ENCODE measurements at regions of chr2 and their contacts with region 1.

Region 1: DNA sequence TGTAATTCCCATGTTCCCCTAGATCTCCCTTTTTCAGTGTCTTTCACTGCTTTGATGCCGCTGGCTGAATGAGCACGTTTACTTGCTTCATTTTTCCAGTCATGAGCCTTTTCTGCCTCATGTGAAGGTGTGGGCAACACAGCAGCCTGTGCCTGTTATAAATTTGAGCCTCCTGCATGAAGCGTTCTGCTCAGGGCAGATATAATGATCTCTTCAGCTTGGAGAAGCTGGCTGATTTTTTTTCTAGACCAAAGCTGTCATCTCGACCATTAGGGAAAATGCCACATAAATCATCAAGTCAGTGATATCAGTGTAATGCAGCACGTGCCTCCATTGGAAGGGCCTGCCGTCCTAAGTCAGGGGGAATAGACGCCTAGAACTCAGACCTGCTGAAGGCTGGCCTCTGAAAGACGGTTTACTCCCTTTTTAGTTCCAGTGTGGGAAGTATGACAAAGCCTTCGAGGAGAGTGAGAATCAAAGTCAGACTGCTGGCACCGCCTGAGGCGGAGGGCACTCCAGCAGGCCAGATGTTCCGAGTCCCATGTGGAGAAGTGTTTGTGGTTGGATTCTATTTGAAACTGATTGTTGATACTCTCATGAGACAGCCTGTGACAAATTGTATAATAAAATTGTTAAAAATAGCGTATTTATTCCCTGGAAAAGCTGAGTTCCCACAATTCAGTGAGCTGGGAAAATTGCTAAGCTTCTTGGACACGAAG is 196.5 kb downstream of the MYO1B start:
- DNase-seq: peak; percentile 27
- ATAC-seq: no peak
- H3K4me3 ChIP-seq: no peak overlapping the region
- H3K27ac ChIP-seq: no peak overlapping the region
- H3K4me1 ChIP-seq: 0 out of 2 replicates have a peak, but pooled peaks cover 2% of the 10 kb centered on the region
- H3K27me3 ChIP-seq: no peaks in the 10 kb centered on the region; the same call in 1 of the 2 replicates
- CTCF ChIP-seq: no peak
- POLR2A ChIP-seq: no peak
- RAD21 ChIP-seq: no peak

Region 2: DNA sequence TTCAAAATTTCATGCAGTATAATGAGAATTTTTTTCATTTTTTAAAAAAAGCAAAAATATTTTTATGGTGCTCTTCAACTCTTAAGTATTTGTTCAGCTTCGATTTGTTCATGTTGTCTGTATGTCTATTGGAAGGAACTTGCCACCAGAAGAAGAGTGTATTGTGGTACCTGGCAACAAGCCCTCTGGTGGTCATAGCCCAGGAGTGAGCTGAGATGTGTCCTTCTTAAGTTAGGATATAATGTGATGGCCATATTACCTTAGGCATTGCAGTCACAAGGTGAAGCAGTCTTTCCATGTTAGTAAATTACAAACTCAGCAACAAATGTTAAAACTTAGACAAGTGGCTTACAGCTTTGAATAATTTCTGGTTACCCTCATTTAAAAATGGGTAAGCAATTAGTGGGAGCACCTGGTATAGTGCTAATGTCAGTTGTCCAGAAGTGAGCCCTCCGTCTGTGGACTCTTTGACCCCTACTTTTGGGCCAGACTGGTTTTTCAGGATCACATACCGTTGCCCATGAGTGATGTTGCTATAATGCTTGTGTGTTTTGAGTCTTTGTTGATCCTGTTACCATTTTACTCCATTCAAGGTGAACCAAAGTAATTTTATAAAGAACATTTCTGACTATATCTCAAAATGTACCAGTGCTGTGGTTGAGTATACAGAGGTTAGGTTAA is 139.1 kb before region 1 on chr2:
- CTCF ChIA-PET with region 1: no interaction called
- POLR2A ChIA-PET with region 1: no interaction called
- dilution Hi-C with region 1: no loop called
- in situ Hi-C with region 1: no loop called
- intact Hi-C with region 1: no loop called
- DNase-seq: peak; percentile 23
- ATAC-seq: no peak
- H3K4me3 ChIP-seq: no peak overlapping the region
- H3K27ac ChIP-seq: peak overlapping the region; percentile 15; the same call in 1 of the 2 replicates
- H3K4me1 ChIP-seq: peaks cover 42% of the 10 kb centered on the region
- H3K27me3 ChIP-seq: no peaks in the 10 kb centered on the region
- CTCF ChIP-seq: peak; percentile 18; the same call in 1 of the 2 replicates
- POLR2A ChIP-seq: no peak
- RAD21 ChIP-seq: peak; percentile 23; the same call in 1 of the 2 replicates

Region 3: GRCh38 chr2:191459158-191459557 is 17.5 kb after region 1 on chr2:
- CTCF ChIA-PET with region 1: interaction called, 4 read pairs
- POLR2A ChIA-PET with region 1: no interaction called
- dilution Hi-C with region 1: no loop called
- in situ Hi-C with region 1: no loop called
- intact Hi-C with region 1: loop called (anchors 2 kb)
- DNase-seq: no peak
- ATAC-seq: no peak
- H3K4me3 ChIP-seq: no peak overlapping the region
- H3K27ac ChIP-seq: no peak overlapping the region
- H3K4me1 ChIP-seq: no peaks in the 10 kb centered on the region
- H3K27me3 ChIP-seq: no peaks in the 10 kb centered on the region
- CTCF ChIP-seq: no peak
- POLR2A ChIP-seq: no peak
- RAD21 ChIP-seq: no peak

Region 4: GRCh38 chr2:191478799-191479679 is 37.4 kb after region 1 on chr2:
- CTCF ChIA-PET with region 1: no interaction called
- POLR2A ChIA-PET with region 1: no interaction called
- dilution Hi-C with region 1: no loop called
- in situ Hi-C with region 1: no loop called
- intact Hi-C with region 1: loop called (anchors 5 kb)
- DNase-seq: peak; percentile 39
- ATAC-seq: peak; percentile 68
- H3K4me3 ChIP-seq: no peak overlapping the region
- H3K27ac ChIP-seq: no peak overlapping the region
- H3K4me1 ChIP-seq: no peaks in the 10 kb centered on the region
- H3K27me3 ChIP-seq: no peaks in the 10 kb centered on the region
- CTCF ChIP-seq: no peak
- POLR2A ChIP-seq: no peak
- RAD21 ChIP-seq: no peak